Endothelial cell of umbilical vein (primary cell): ENCODE measurements at regions of chr3 and their contacts with region 1.

Region 1: DNA sequence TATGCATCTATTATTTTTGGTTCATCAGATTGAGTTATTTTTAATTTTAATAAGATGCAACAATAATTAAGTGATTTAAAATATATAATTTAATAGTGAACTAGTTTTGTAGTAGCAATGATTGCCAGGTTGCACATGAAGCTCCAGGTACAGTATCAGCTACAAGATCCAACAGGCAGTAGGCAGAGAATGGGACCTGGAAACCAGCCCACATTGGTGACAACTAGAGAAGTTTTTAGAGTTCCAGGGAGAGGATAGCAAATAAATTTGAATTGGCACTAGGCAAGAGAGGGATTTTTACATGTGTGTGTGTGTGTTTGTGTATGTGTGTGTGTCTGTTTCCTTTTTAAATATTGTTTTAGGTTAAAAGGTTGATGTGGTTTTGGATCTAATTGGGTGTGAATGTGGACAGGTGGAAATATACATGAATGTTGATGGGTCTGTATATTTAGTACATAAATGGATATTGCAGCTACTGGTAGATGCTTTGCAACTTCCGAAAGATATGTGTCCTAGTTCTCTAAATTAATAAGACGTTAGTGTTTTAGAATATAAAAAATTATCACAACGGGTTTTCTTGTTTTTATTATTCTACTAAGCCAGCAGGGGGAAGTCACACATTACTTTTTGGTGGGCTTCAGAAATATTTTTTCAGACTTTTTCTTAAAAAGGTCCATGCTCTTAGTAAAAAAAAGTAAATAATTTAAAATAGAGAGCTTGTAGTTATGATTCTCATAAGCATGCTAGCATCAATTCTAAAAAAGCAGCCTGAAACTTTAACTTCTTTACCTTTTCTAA is 110.1 kb upstream of the GBE1 start:
- DNase-seq: no peak
- H3K4me3 ChIP-seq: no peak overlapping the region
- H3K27ac ChIP-seq: no peak overlapping the region
- H3K4me1 ChIP-seq: no peaks in the 10 kb centered on the region
- H3K27me3 ChIP-seq: peaks cover 0 to 3% of the 10 kb centered on the region in 2 experiments
- CTCF ChIP-seq: no peak
- POLR2A ChIP-seq: no peak

Region 2: DNA sequence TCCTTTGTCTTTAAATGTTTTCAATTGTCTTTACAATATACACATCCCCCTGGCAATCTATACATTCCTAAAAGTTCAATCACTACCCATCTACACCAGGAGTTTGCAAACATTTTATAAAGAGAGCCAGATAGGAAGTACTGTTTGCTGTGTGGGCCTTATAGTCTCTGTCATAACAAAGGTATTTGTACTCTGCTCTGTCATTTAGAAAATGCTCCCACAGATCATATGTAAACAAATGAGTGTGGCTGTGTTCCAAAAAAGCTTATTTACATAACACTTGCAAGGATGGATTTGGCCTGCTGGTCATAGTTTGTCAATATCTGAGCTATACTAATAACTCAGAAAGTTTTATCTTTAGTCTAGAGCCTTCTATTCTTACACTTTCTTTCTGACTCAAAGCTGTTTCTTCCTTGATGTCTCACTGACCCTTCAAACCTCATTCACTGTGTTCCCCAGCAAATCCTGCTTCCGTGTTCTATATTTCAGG is 622.0 kb before region 1 on chr3:
- CTCF ChIA-PET with region 1: no interaction called
- POLR2A ChIA-PET with region 1: interaction called, 10 read pairs
- dilution Hi-C with region 1: no loop called
- intact Hi-C with region 1: no loop called
- DNase-seq: peak; percentile 54
- H3K4me3 ChIP-seq: no peak overlapping the region
- H3K27ac ChIP-seq: peak overlapping the region; percentile 53
- H3K4me1 ChIP-seq: peaks cover 11% of the 10 kb centered on the region
- H3K27me3 ChIP-seq: no peaks in the 10 kb centered on the region
- CTCF ChIP-seq: no peak
- POLR2A ChIP-seq: no peak

Region 3: GRCh38 chr3:81666493-81667121 is 204.9 kb before region 1 on chr3:
- CTCF ChIA-PET with region 1: no interaction called
- POLR2A ChIA-PET with region 1: no interaction called
- dilution Hi-C with region 1: no loop called
- intact Hi-C with region 1: loop called (anchors 5 kb)
- DNase-seq: peak; percentile 60
- H3K4me3 ChIP-seq: no peak overlapping the region
- H3K27ac ChIP-seq: no peak overlapping the region
- H3K4me1 ChIP-seq: no peaks in the 10 kb centered on the region
- H3K27me3 ChIP-seq: no peaks in the 10 kb centered on the region
- CTCF ChIP-seq: peak; percentile 43 to 52
- POLR2A ChIP-seq: no peak

Region 4: GRCh38 chr3:82022836-82023235 is 151.3 kb after region 1 on chr3:
- CTCF ChIA-PET with region 1: no interaction called
- POLR2A ChIA-PET with region 1: no interaction called
- dilution Hi-C with region 1: no loop called
- intact Hi-C with region 1: no loop called
- DNase-seq: no peak
- H3K4me3 ChIP-seq: no peak overlapping the region
- H3K27ac ChIP-seq: no peak overlapping the region
- H3K4me1 ChIP-seq: no peaks in the 10 kb centered on the region
- H3K27me3 ChIP-seq: no peaks in the 10 kb centered on the region
- CTCF ChIP-seq: no peak
- POLR2A ChIP-seq: no peak